ENCODE measurements at regions of chr13 and their contacts with region 1.

Region 1: DNA sequence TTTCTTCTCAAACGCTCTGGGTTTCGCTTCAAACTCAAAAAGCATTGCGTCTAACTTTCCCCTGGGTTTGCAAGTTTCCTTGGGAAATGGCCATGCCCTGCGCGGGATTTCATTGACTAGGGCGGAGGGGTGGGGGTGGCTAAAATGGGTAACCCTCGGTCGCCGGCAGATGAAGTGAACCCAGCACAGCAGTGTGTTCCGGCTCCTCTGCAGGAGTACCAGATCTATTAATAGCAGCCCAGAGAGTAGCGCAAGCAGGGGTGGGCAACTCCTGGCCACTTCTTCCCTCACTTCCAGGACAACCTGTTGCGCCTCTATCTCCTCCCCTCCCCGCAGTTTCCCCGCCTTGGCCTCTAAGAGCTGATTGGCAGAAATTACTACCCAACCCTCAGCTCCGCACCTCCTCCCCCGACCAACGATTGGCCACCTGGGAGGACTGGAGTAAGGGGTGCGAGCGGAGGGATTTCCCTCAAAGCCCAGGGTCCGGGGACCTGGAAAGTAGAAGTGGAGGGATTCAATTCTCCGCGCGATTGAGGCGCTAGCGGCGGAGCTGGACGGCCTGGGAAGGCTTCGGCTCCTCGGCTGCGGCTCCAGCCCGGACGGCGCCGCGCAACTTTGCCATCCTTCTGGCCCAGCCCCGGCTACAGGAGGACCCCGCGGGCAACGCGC is at the start of gene FREM2:
- DNase-seq: peak; percentile 94
- ATAC-seq: peak; percentile 93
- H3K4me3 Mint-ChIP-seq: peak within 1 kb of the TSS; percentile 86
- H3K27ac Mint-ChIP-seq: peak within 1 kb of the TSS; percentile 94
- H3K4me1 Mint-ChIP-seq: peaks cover 17% of the 10 kb centered on the region
- H3K27me3 Mint-ChIP-seq: peaks cover 19% of the 10 kb centered on the region
- CTCF ChIP-seq: no peak
- total RNA-seq, gene FREM2: 23.7 to 24.5 TPM (median 24.1 TPM) in 3 replicates

Region 2: GRCh38 chr13:38264363-38265131 is 422.2 kb before region 1 on chr13:
- CTCF ChIA-PET with region 1: no interaction called
- POLR2A ChIA-PET with region 1: no interaction called
- DNase-seq: no peak
- ATAC-seq: peak; percentile 24; the same call in 1 of the 2 replicates
- H3K4me3 Mint-ChIP-seq: no peak overlapping the region
- H3K27ac Mint-ChIP-seq: no peak overlapping the region
- H3K4me1 Mint-ChIP-seq: peaks cover 9% of the 10 kb centered on the region
- H3K27me3 Mint-ChIP-seq: no peaks in the 10 kb centered on the region
- CTCF ChIP-seq: no peak

Region 3: GRCh38 chr13:38530492-38530891 is 156.2 kb before region 1 on chr13:
- CTCF ChIA-PET with region 1: no interaction called
- POLR2A ChIA-PET with region 1: no interaction called
- DNase-seq: no peak
- ATAC-seq: no peak
- H3K4me3 Mint-ChIP-seq: no peak overlapping the region
- H3K27ac Mint-ChIP-seq: no peak overlapping the region
- H3K4me1 Mint-ChIP-seq: peaks cover 30% of the 10 kb centered on the region
- H3K27me3 Mint-ChIP-seq: no peaks in the 10 kb centered on the region
- CTCF ChIP-seq: no peak

Region 4: GRCh38 chr13:38697628-38698333 is 11.1 kb after region 1 on chr13:
- CTCF ChIA-PET with region 1: interaction called, 17 read pairs
- POLR2A ChIA-PET with region 1: interaction called, 5 read pairs
- DNase-seq: no peak
- ATAC-seq: peak; percentile 91
- H3K4me3 Mint-ChIP-seq: no peak overlapping the region
- H3K27ac Mint-ChIP-seq: no peak overlapping the region
- H3K4me1 Mint-ChIP-seq: peaks cover 35% of the 10 kb centered on the region
- H3K27me3 Mint-ChIP-seq: no peaks in the 10 kb centered on the region
- CTCF ChIP-seq: no peak

Region 5: DNA sequence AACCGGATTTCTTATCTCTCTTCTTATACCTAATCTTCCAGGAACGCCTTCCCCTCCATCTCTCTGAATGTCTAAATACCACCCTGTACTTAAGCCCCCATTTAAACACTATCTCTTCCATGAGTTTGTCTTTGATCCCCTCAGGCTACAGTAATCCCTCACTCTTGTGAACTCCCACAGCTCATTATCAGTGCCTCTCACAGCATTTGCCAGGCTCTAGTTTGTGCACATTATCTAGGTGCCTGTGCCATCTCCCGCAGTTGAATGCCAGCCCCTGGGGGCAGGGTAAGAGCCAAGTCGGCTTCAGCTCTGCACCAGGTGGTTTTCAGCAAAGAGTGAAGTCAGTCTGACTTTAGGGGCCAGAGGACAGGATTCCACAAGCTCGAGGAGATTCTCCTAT is 71.6 kb after region 1 on chr13:
- CTCF ChIA-PET with region 1: interaction called, 22 read pairs
- POLR2A ChIA-PET with region 1: interaction called, 11 read pairs
- DNase-seq: no peak
- ATAC-seq: no peak
- H3K4me3 Mint-ChIP-seq: no peak overlapping the region
- H3K27ac Mint-ChIP-seq: no peak overlapping the region
- H3K4me1 Mint-ChIP-seq: peaks cover 25% of the 10 kb centered on the region
- H3K27me3 Mint-ChIP-seq: no peaks in the 10 kb centered on the region
- CTCF ChIP-seq: no peak

Region 6: DNA sequence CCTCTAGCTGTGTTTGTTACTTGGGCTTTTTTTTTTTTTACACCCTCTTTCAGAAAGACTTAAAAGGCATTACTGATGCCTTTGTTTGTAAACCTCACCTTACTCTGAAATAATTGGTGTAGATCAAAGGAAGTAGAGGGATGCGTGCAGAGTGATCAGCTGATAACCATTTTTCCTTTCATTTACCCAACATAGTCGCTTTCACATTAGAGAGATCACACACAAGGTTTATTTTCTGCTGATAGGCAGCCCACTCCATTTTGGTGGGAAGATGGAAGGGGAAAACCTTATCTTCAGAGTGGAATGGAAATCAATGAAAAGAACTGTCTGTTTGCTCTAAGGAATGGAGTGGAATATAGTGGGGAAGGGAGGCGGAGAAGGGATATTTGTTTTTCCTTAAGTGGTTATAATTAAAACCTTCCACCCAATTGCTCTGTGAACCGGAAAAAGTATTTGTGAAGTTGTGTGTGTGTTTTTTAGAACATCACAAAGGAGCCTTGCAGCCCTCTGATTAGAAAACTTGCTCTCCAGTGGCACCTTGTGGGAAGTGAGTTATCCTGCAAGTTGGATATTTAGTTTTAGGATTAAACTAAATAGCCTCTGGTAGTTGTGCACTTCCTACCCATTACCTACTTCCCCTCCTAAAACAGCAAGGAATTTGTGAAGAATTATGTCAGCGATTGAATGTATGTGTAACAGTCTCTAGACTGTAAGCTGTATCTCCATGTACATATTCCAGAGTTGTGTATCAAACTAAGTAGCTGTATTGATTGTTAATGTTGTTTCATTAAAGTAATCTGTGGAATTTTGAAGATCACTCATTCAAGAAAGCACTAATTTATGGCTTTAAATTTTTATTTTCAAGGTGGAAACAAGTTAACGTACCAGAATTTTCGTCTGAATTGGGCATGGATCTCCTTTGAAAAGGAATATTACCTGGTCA is 77.0 kb after region 1 on chr13:
- CTCF ChIA-PET with region 1: interaction called, 22 read pairs
- POLR2A ChIA-PET with region 1: interaction called, 11 read pairs
- DNase-seq: peak; percentile 22
- ATAC-seq: peak; percentile 91
- H3K4me3 Mint-ChIP-seq: no peak overlapping the region
- H3K27ac Mint-ChIP-seq: 0 out of 2 replicates have a peak overlapping the region, but pooled peaks have one; percentile 50
- H3K4me1 Mint-ChIP-seq: peaks cover 16% of the 10 kb centered on the region
- H3K27me3 Mint-ChIP-seq: no peaks in the 10 kb centered on the region
- CTCF ChIP-seq: no peak

Region 7: GRCh38 chr13:38872693-38873092 is 186.0 kb after region 1 on chr13:
- CTCF ChIA-PET with region 1: interaction called, 19 read pairs
- POLR2A ChIA-PET with region 1: interaction called, 3 read pairs
- DNase-seq: peak; percentile 74
- ATAC-seq: peak; percentile 83
- H3K4me3 Mint-ChIP-seq: no peak overlapping the region
- H3K27ac Mint-ChIP-seq: no peak overlapping the region
- H3K4me1 Mint-ChIP-seq: peaks cover 4% of the 10 kb centered on the region; the same call in 1 of the 2 replicates
- H3K27me3 Mint-ChIP-seq: no peaks in the 10 kb centered on the region
- CTCF ChIP-seq: peak; percentile 49

Measured in WTC11 (cell line).